H1 (cell line): ENCODE measurements at regions of chr11 and their contacts with region 1.

Region 1: GRCh38 chr11:8263769-8264410 is at the start of gene LMO1:
- DNase-seq: peak in 1 of 2 experiments; percentile 94
- H3K4me3 ChIP-seq: peak within 1 kb of the TSS; percentile 44 to 65 (median 58)
- H3K27ac ChIP-seq: no peak within 1 kb of the TSS
- H3K4me1 ChIP-seq: peaks cover 0 to 10% (median 8%) of the 10 kb centered on the region in 4 experiments; a peak in 6 of 7 replicates
- H3K27me3 ChIP-seq: peaks cover 50 to 85% (median 78%) of the 10 kb centered on the region in 4 experiments
- CTCF ChIP-seq: peak; percentile 86 to 93 (median 86)
- EP300 ChIP-seq: no peak
- POLR2A ChIP-seq: no peak
- RAD21 ChIP-seq: peak; percentile 74 to 82
- total RNA-seq, gene LMO1: not detected in 2 replicates

Region 2: GRCh38 chr11:7672960-7673723 is 590.7 kb before region 1 on chr11 and contains the start of gene CYB5R2:
- CTCF ChIA-PET with region 1: no interaction called
- POLR2A ChIA-PET with region 1: no interaction called
- DNase-seq: peak in 1 of 2 experiments; percentile 79
- H3K4me3 ChIP-seq: peak within 1 kb of the TSS; percentile 59 to 94 (median 66)
- H3K27ac ChIP-seq: peak within 1 kb of the TSS; percentile 73; the same call in 1 of the 2 replicates
- H3K4me1 ChIP-seq: peaks cover 0 to 10% (median 4%) of the 10 kb centered on the region in 4 experiments; a peak in 4 of 7 replicates
- H3K27me3 ChIP-seq: no peaks in the 10 kb centered on the region
- CTCF ChIP-seq: no peak
- EP300 ChIP-seq: no peak
- POLR2A ChIP-seq: peak in 1 of 2 experiments; percentile 65; a peak in 2 of 3 replicates
- RAD21 ChIP-seq: no peak
- total RNA-seq, gene CYB5R2: 50.4 and 53.0 TPM in 2 replicates

Region 3: GRCh38 chr11:8192016-8192895 is 71.6 kb before region 1 on chr11:
- CTCF ChIA-PET with region 1: interaction called, 38 read pairs
- POLR2A ChIA-PET with region 1: no interaction called
- DNase-seq: peak in 1 of 2 experiments; percentile 88
- H3K4me3 ChIP-seq: no peak overlapping the region
- H3K27ac ChIP-seq: no peak overlapping the region
- H3K4me1 ChIP-seq: peaks cover 0 to 3% (median 0%) of the 10 kb centered on the region in 4 experiments; a peak in 2 of 7 replicates
- H3K27me3 ChIP-seq: peaks cover 0 to 10% (median under 1%) of the 10 kb centered on the region in 4 experiments; a peak in 1 of 7 replicates
- CTCF ChIP-seq: peak; percentile 83 to 98 (median 89)
- EP300 ChIP-seq: no peak
- POLR2A ChIP-seq: no peak
- RAD21 ChIP-seq: peak; percentile 89

Region 4: GRCh38 chr11:8239536-8240228 is 24.2 kb before region 1 on chr11:
- CTCF ChIA-PET with region 1: interaction called, 72 read pairs
- POLR2A ChIA-PET with region 1: interaction called, 5 read pairs
- DNase-seq: no peak
- H3K4me3 ChIP-seq: no peak overlapping the region
- H3K27ac ChIP-seq: no peak overlapping the region
- H3K4me1 ChIP-seq: peaks cover 10 to 19% (median 13%) of the 10 kb centered on the region in 4 experiments; a peak in 6 of 7 replicates
- H3K27me3 ChIP-seq: no peaks in the 10 kb centered on the region; a peak in 2 of 7 replicates
- CTCF ChIP-seq: no peak
- EP300 ChIP-seq: no peak
- POLR2A ChIP-seq: no peak
- RAD21 ChIP-seq: no peak

Region 5: DNA sequence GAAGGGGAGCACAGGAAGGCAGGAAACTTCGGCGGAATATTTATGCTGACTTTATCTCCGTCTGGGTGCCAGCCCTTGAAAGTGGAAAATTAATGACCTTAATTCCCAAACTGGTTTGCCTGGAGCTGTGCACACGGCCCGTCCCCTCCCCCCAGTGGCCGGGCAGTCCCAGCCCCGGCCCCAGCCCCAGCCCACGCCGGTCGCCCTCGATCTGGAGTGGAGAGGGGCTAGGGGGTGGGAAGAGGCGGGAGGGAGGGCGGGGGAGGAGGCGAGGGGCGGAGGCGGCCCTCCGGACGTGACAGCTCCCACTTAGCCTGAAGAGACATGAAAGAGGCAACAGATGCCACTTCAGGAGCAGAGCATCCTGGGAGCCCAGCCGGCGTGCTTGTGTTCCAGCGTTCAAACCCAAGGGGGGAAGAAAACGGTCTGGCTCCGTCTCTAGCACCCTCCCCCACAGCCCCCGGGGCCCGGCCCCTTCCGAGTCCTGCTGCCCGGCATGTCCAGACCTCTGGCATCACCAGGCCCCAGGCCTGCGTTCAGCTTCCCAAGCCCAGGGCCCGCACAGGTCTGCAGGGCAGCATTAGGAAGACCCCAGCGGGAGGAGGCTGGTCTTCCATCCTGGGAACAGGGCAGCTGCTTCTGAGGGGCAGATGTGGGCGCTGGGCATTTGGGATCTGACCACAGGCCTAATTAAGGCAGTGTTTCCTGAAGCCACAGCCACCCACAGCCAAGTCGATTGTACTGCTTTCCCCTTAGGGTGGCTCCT is 19.8 kb after region 1 on chr11:
- CTCF ChIA-PET with region 1: interaction called, 59 read pairs
- POLR2A ChIA-PET with region 1: interaction called, 3 read pairs
- DNase-seq: peak in 1 of 2 experiments; percentile 74
- H3K4me3 ChIP-seq: peak overlapping the region; percentile 6 to 64 (median 40)
- H3K27ac ChIP-seq: no peak overlapping the region
- H3K4me1 ChIP-seq: peaks cover 0 to 11% (median 8%) of the 10 kb centered on the region in 4 experiments; a peak in 6 of 7 replicates
- H3K27me3 ChIP-seq: peaks cover 0 to 10% (median 0%) of the 10 kb centered on the region in 4 experiments; a peak in 4 of 7 replicates
- CTCF ChIP-seq: no peak
- EP300 ChIP-seq: no peak
- POLR2A ChIP-seq: no peak
- RAD21 ChIP-seq: no peak

Region 6: GRCh38 chr11:8318336-8318935 is 54.5 kb after region 1 on chr11:
- CTCF ChIA-PET with region 1: interaction called, 107 read pairs
- POLR2A ChIA-PET with region 1: no interaction called
- DNase-seq: peak in 1 of 2 experiments; percentile 81
- H3K4me3 ChIP-seq: no peak overlapping the region
- H3K27ac ChIP-seq: no peak overlapping the region
- H3K4me1 ChIP-seq: no peaks in the 10 kb centered on the region
- H3K27me3 ChIP-seq: peaks cover 0 to 3% (median 0%) of the 10 kb centered on the region in 4 experiments; a peak in 2 of 7 replicates
- CTCF ChIP-seq: peak; percentile 90 to 92 (median 92)
- EP300 ChIP-seq: no peak
- POLR2A ChIP-seq: no peak
- RAD21 ChIP-seq: peak; percentile 90

Region 7: DNA sequence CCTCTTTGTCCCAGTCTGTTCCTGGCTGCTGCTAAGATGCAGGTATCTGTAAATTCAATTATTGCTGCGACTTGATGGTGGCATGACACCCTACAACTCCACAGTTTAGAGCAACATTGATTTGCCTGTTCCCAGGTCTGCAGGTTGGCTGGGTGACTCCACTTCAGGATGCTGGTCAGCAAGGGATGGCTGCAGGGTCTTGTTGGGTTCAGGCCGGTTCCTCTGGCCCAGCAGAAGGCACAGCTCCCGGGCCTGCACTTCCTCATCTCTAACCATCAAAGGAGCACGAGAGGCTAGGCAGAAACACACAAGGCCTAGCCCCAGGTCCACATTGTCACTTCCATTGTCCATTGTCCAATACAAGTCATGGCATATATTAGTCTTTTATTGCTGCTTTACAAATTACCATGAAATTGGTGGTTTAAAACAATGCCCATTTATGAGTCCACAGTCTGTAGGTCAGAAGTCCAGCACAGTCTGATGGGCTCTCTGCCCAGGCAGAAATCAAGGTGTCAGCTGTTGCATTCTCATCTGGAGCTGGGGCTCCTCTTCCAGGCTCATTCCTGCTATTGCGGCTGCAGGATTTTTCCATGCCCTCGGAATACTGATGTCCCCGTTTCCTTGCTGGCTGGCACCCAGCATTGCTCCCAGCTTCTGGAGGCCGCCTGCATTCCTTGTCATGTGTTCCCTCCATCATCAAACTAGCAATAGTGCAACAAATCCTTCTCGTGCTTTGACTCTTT is 96.4 kb after region 1 on chr11:
- CTCF ChIA-PET with region 1: interaction called, 15 read pairs
- POLR2A ChIA-PET with region 1: no interaction called
- DNase-seq: no peak
- H3K4me3 ChIP-seq: no peak overlapping the region
- H3K27ac ChIP-seq: no peak overlapping the region
- H3K4me1 ChIP-seq: no peaks in the 10 kb centered on the region; a peak in 2 of 7 replicates
- H3K27me3 ChIP-seq: no peaks in the 10 kb centered on the region
- CTCF ChIP-seq: peak; percentile 31 to 55 (median 53); a peak in 3 of 4 replicates
- EP300 ChIP-seq: no peak
- POLR2A ChIP-seq: no peak
- RAD21 ChIP-seq: peak; percentile 56 to 70